T-cell (primary cell): ENCODE measurements at regions of chr14 and their contacts with region 1.

Region 1: GRCh38 chr14:21215130-21215878 is 53.9 kb downstream of the HNRNPC start:
- DNase-seq: no peak
- ATAC-seq: peak in 1 of 4 experiments; percentile 15
- H3K4me3 ChIP-seq: peak overlapping the region in 1 of 2 donors; percentile 25
- H3K4me3 Mint-ChIP-seq: peak overlapping the region; percentile 28 to 69 (median 59)
- H3K27ac ChIP-seq: peak overlapping the region; percentile 44
- H3K27ac Mint-ChIP-seq: peak overlapping the region; percentile 56 to 86
- H3K4me1 ChIP-seq: peaks cover 23 to 33% of the 10 kb centered on the region in 2 experiments
- H3K4me1 Mint-ChIP-seq: peaks cover 71 to 82% (median 78%) of the 10 kb centered on the region in 3 donors
- H3K27me3 ChIP-seq: no peaks in the 10 kb centered on the region
- H3K27me3 Mint-ChIP-seq: no peaks in the 10 kb centered on the region

Region 2: DNA sequence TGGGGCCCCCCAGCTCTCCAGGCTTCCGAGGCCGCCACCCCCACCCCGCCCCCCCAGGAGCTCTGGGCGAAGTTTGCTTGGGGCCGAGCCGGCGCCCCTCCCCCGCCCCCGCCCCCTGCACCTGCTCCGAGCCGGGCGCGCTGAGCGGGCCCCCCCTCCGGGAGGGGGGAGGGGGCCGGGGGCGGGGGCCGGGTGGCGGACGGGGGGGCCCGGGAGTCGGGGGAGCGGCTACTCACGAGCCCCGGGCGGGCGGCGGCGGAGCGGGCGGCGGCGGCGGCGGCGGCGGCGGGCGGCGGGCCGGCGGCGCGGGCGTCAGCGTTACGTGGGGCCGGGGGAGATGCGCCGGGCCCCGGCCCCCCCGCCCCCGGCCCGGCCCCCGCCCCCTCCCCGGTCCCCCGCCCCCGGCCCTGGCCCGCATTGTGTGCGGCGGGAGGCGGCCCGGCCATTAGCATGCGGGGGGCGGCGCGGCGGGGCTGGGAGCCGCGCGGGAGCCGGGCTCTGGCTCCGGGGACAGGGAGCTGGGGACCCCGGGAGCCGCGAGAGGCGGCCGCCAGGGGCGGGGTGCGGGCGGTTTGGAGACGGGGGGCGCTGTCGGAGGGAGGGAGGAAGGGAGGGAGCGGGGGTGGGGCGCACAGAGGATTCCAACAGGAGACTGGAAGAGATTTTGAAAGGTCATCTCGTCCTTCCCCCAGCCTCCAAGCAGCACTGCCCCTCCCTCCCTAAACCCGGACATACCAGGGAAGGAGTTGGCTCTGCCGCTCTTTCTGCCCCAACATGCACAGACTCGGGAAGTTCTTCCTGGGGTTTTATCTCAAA is 117.0 kb before region 1 on chr14 and contains the start of gene ZNF219:
- CTCF ChIA-PET with region 1: no interaction called
- POLR2A ChIA-PET with region 1: no interaction called
- DNase-seq: peak in 9 of 35 experiments; percentile 14 to 57 (median 24)
- ATAC-seq: peak; percentile 56 to 62 (median 58)
- H3K4me3 ChIP-seq: peak within 1 kb of the TSS; percentile 60 to 63
- H3K4me3 Mint-ChIP-seq: peak within 1 kb of the TSS; percentile 80 to 88 (median 87)
- H3K27ac ChIP-seq: peak within 1 kb of the TSS; percentile 71
- H3K27ac Mint-ChIP-seq: peak within 1 kb of the TSS; percentile 83 to 84
- H3K4me1 ChIP-seq: peaks cover 7 to 21% of the 10 kb centered on the region in 2 experiments
- H3K4me1 Mint-ChIP-seq: peaks cover 19 to 29% (median 20%) of the 10 kb centered on the region in 3 donors
- H3K27me3 ChIP-seq: peaks cover 0 to 9% of the 10 kb centered on the region in 2 experiments
- H3K27me3 Mint-ChIP-seq: peaks cover 0 to 1% of the 10 kb centered on the region in 2 donors
- total RNA-seq, gene ZNF219: 7.2 to 12.4 (median 8.1) TPM

Region 3: DNA sequence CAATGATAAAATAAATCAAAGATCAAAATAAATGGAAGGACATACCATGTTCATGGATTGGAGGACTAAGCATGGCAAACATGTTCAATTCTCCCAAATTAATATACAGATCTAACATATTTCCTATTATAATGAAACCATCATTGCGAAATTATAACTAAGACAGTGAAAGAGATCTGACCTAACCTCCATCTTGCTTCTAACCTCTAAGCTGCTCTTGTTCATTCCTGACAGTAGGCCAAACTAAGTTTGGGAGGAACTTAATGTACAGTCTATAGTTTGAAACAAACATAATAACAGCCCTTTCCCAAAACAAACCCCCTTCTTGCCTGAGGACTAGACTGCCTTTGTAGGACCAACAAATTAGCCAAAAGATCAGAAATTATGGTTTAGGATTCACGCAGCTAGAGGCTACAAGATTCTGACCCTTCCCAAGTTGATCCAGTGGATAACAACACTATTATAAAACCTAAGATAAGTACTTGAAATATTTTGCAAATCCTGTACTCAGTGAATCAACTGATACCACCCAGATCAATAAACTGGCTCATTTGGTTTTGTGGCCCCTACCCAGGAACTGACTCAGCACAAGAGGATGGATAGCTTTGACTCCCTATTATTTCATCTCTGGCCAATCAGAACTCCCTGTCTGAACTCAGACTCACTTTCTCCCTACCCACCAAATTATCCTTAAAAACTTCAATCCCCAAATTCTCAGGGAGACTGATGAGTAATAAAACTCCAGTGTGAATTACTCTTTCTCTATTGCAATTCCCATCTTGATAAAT is 17.7 kb before region 1 on chr14:
- CTCF ChIA-PET with region 1: no interaction called
- POLR2A ChIA-PET with region 1: interaction called in 1 of 2 experiments, 12 read pairs
- DNase-seq: no peak
- ATAC-seq: no peak
- H3K4me3 ChIP-seq: no peak overlapping the region
- H3K4me3 Mint-ChIP-seq: no peak overlapping the region
- H3K27ac ChIP-seq: no peak overlapping the region
- H3K27ac Mint-ChIP-seq: peak overlapping the region in 1 of 2 donors; percentile 25
- H3K4me1 ChIP-seq: peaks cover 0 to 2% of the 10 kb centered on the region in 2 experiments
- H3K4me1 Mint-ChIP-seq: peaks cover 0 to 11% (median 6%) of the 10 kb centered on the region in 3 donors
- H3K27me3 ChIP-seq: peaks cover 0 to 6% of the 10 kb centered on the region in 2 experiments
- H3K27me3 Mint-ChIP-seq: no peaks in the 10 kb centered on the region